Activated T-helper 2 cell treated with anti-CD3 and anti-CD28 coated beads, Interferon-gamma antibody, Interleukin-2, Interleukin-4, amounts not matched to agents 10 μg/mL and 5 μg/mL and 100 μg/mL, durations not matched to agents 14 hours and 24 hours and 36 hours (primary cell): ENCODE measurements at regions of chr12 and their contacts with region 1.

Region 1: DNA sequence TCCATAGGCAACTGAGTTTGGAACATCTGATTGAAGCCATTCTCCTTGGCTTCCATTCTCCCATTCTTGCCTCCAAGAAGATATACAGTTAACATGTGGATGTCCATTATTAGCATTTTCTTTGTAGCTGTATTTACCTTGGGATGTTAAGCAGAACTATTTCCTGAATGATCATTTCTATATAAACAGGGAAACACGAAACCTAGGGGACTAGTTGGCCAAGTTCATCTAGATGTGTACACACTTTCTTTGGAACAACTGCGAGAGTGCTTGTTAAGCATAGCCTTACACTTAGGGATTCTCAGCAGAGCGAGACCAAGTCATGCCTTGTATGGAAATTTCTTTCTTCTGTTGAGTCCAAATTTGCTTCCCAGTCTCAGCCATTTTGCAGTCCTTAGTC is 42.1 kb downstream of the DRAM1 start:
- DNase-seq: no peak
- H3K4me3 Mint-ChIP-seq: no peak overlapping the region
- H3K27ac Mint-ChIP-seq: no peak overlapping the region
- H3K4me1 Mint-ChIP-seq: peaks cover 5% of the 10 kb centered on the region
- H3K27me3 Mint-ChIP-seq: no peaks in the 10 kb centered on the region

Region 2: DNA sequence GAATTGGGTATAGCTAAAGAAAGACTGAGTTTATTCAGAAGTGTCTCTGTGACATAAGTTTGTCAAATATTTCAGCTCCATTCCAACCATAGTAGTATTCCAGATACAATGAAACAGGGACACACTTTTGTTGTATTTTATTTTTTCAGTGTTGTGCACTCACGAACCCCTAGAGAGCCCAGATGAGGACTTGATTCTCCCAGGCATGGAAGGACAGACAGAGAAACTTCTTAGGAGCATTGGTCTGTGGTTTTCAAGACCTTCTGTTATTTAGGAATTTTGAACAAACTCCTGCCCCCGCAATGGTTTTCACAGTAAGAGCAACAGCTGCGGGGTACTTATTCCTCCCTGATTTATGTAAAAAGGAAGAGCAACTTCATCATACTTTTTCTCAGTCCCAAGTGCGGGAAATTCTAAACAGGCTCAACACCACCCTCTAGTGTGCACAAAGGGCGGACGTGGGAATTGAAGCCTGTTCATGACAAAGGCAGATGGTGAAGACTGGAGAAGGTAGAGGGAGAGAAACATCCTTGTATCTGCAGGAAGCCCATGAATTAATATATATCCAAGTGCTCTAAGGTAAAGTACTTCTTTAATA is 850.0 kb after region 1 on chr12:
- intact Hi-C with region 1: loop called (anchors 5 kb)
- DNase-seq: peak; percentile 23
- H3K4me3 Mint-ChIP-seq: no peak overlapping the region
- H3K27ac Mint-ChIP-seq: no peak overlapping the region
- H3K4me1 Mint-ChIP-seq: no peaks in the 10 kb centered on the region
- H3K27me3 Mint-ChIP-seq: peaks cover 2% of the 10 kb centered on the region